ENCODE measurements at regions of chr5 and their contacts with region 1.

Region 1: DNA sequence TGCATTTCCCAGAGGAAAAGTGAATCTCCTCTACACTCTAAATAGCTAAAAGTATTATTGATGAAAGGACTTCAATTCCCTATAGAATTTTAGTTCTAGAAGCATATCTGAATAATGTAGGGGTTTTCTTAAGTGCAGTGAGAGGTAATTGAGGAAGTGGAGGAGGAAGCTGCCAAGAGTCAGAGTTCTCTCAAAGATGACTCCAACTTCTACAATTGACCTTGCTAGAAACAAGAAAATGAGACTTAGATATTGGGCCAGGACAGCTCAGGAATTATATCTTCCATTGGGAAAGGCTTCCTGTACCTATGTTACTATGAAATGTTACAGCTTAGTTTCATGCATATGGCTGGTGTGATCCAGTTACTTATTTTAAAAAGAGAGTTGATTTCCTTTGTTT is 10.4 kb upstream of the F2R start:
- DNase-seq: no peak
- CTCF ChIP-seq: no peak

Region 2: GRCh38 chr5:76691467-76692138 is 14.0 kb before region 1 on chr5:
- CTCF ChIA-PET with region 1: interaction called, 15 read pairs
- POLR2A ChIA-PET with region 1: no interaction called
- DNase-seq: no peak
- CTCF ChIP-seq: no peak